Naive thymus-derived CD4-positive, alpha-beta T cell (primary cell): ENCODE measurements at regions of chr13 and their contacts with region 1.

Region 1: DNA sequence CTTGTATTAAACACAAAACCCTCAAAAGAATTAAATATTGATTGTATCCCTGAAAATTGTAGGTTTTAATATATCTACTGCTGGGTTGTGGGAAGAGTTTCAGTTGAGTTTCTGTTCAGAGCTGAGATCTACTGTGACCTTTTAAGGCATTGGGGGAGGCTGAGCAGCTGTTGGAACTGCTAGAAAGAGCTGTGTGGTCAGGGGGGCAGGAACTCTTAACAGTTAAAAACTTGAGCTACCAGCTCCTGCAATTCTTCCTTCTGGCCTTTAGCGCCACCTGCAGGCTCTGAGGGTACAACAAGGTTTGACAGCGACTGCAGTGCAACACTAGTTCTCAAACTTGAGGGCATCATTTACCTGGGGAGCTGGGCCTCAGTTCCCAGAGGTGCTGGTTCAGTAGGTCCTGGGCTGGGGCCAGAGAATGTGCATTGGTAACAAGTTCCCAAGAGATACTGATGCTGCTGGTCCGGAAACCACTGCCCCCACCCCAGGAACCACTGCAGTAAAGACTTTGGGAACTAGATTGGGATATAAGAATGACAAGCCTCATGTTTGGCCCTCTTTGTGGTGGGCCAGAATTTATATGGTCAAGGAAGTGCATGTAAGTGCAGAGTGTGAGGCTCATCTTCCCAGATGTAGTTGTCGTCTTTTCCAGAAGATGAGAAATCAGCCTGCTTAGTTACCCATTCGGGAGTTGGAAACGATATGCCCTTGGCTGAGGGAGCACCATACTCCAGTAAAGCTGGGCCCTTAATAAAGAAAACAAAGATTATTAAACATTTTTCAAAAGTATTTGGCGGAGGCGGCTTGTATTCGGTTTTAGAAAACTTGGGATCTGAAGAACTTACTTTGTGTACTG is 2.6 kb downstream of the RNASEH2B start:
- DNase-seq: peak; percentile 72 to 86 (median 82)
- ATAC-seq: peak; percentile 73
- H3K4me3 ChIP-seq: peak overlapping the region; percentile 86
- H3K4me3 Mint-ChIP-seq: peak overlapping the region; percentile 72 to 99 (median 93)
- H3K27ac ChIP-seq: peak overlapping the region; percentile 86
- H3K27ac Mint-ChIP-seq: peak overlapping the region; percentile 72 to 98 (median 92)
- H3K4me1 ChIP-seq: peaks cover 15 to 28% of the 10 kb centered on the region in 2 donors
- H3K4me1 Mint-ChIP-seq: peaks cover 34 to 70% (median 62%) of the 10 kb centered on the region in 7 donors
- H3K27me3 ChIP-seq: no peaks in the 10 kb centered on the region
- H3K27me3 Mint-ChIP-seq: no peaks in the 10 kb centered on the region

Region 2: DNA sequence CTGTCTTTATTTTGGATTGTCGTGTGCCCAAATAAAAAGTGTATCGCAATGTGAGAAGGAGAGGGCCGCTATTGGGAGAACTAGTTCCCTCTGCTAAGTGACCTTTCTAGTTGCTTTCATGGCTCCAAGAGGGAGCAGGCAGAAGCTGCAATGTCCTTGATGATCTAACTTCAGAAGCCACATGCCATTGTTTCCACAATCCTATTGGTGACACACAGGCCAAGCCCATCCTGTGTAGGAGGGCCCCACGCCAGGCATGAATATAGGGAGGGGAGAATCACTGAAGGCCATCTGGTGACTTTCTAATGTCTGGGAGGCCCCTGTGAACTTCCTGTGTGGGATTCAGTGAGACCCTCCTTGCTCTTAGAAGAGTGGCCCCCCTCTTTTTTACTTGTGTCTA is 1071.9 kb before region 1 on chr13:
- CTCF ChIA-PET with region 1: no interaction called
- POLR2A ChIA-PET with region 1: no interaction called
- intact Hi-C with region 1: loop called in 1 of 2 experiments (anchors 5 kb)
- DNase-seq: no peak
- ATAC-seq: no peak
- H3K4me3 ChIP-seq: no peak overlapping the region
- H3K4me3 Mint-ChIP-seq: no peak overlapping the region
- H3K27ac ChIP-seq: no peak overlapping the region
- H3K27ac Mint-ChIP-seq: no peak overlapping the region
- H3K4me1 ChIP-seq: no peaks in the 10 kb centered on the region
- H3K4me1 Mint-ChIP-seq: no peaks in the 10 kb centered on the region
- H3K27me3 ChIP-seq: no peaks in the 10 kb centered on the region
- H3K27me3 Mint-ChIP-seq: no peaks in the 10 kb centered on the region

Region 3: GRCh38 chr13:50123862-50124536 is 788.2 kb before region 1 on chr13:
- CTCF ChIA-PET with region 1: interaction called, 8 read pairs
- POLR2A ChIA-PET with region 1: interaction called, 23 read pairs
- intact Hi-C with region 1: loop called (anchors 1 kb)
- DNase-seq: peak in 7 of 9 donors; percentile 46 to 88 (median 64)
- ATAC-seq: peak; percentile 82
- H3K4me3 ChIP-seq: peak overlapping the region; percentile 52
- H3K4me3 Mint-ChIP-seq: peak overlapping the region; percentile 86 to 96 (median 93)
- H3K27ac ChIP-seq: peak overlapping the region; percentile 95
- H3K27ac Mint-ChIP-seq: peak overlapping the region; percentile 90 to 99 (median 97)
- H3K4me1 ChIP-seq: peaks cover 24 to 29% of the 10 kb centered on the region in 2 donors
- H3K4me1 Mint-ChIP-seq: peaks cover 25 to 61% (median 50%) of the 10 kb centered on the region in 7 donors
- H3K27me3 ChIP-seq: peaks cover 0 to 11% of the 10 kb centered on the region in 2 donors
- H3K27me3 Mint-ChIP-seq: peaks cover 1 to 15% (median 12%) of the 10 kb centered on the region in 5 donors

Region 4: DNA sequence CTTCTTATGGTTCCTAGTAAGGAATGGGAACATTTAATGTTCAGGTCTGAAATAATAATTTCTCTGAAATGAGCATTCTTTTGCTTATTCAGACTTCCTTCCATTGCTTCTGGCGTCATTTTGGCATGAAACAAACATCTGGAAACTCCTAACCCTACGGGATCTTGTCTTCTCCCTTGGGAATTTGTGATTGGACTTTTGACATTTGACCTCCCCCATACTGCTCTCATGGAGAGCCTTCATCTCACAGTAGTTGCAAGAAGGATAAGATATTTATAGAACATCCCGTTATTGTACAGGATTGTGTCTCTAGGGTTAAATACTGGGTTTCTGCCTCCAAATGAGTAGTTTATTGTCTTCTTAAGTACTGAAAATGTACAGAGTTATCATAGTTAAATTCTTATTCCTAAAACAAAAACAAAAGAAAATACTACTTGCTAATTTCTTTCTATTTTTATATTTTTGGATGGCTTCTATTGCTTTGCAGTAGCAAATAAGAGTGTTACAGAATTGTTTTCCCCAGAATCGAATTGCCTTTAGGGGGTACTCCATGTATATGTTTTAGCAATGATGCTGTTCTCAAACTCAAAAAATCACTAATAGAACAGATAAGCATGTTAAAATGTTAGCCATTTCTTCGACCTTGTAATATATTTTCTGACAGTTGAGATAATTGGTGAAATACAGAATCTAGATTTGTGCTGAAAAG is 435.4 kb before region 1 on chr13:
- CTCF ChIA-PET with region 1: interaction called, 4 read pairs
- POLR2A ChIA-PET with region 1: no interaction called
- intact Hi-C with region 1: loop called in 1 of 2 experiments (anchors 1 kb)
- DNase-seq: no peak
- ATAC-seq: no peak
- H3K4me3 ChIP-seq: no peak overlapping the region
- H3K4me3 Mint-ChIP-seq: no peak overlapping the region
- H3K27ac ChIP-seq: no peak overlapping the region
- H3K27ac Mint-ChIP-seq: no peak overlapping the region
- H3K4me1 ChIP-seq: no peaks in the 10 kb centered on the region
- H3K4me1 Mint-ChIP-seq: no peaks in the 10 kb centered on the region
- H3K27me3 ChIP-seq: no peaks in the 10 kb centered on the region
- H3K27me3 Mint-ChIP-seq: peaks cover 0 to 35% (median 6%) of the 10 kb centered on the region in 5 donors

Region 5: DNA sequence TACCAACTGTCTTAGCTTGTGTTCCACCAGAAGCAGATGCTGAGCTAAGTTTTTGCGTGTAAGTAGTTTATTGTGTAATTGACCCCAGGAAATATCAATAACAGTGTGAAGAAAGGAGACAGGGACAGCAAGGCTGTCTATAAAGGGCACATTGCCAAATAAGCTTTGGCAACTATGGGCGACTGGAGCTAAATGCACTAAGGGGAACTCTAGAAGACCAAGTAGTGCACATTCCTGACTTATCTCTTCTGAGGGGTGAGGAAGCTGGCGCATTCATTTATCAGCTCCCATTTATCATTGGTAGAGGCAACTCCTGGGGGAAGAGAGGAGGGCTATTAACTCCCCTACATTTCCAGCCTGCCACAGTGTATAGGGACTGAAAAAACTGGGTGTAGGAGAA is 203.7 kb before region 1 on chr13:
- CTCF ChIA-PET with region 1: no interaction called
- POLR2A ChIA-PET with region 1: no interaction called
- intact Hi-C with region 1: loop called (anchors 10 kb)
- DNase-seq: no peak
- ATAC-seq: no peak
- H3K4me3 ChIP-seq: no peak overlapping the region
- H3K4me3 Mint-ChIP-seq: no peak overlapping the region
- H3K27ac ChIP-seq: no peak overlapping the region
- H3K27ac Mint-ChIP-seq: no peak overlapping the region
- H3K4me1 ChIP-seq: peaks cover under 1 to 2% of the 10 kb centered on the region in 2 donors
- H3K4me1 Mint-ChIP-seq: peaks cover 0 to 10% (median 5%) of the 10 kb centered on the region in 7 donors
- H3K27me3 ChIP-seq: no peaks in the 10 kb centered on the region
- H3K27me3 Mint-ChIP-seq: peaks cover 0 to 17% (median 8%) of the 10 kb centered on the region in 5 donors

Region 6: GRCh38 chr13:50901701-50902100 is 10.5 kb before region 1 on chr13:
- CTCF ChIA-PET with region 1: interaction called, 28 read pairs
- POLR2A ChIA-PET with region 1: interaction called, 122 read pairs
- intact Hi-C with region 1: no loop called
- DNase-seq: no peak
- ATAC-seq: no peak
- H3K4me3 ChIP-seq: no peak overlapping the region
- H3K4me3 Mint-ChIP-seq: no peak overlapping the region
- H3K27ac ChIP-seq: no peak overlapping the region
- H3K27ac Mint-ChIP-seq: no peak overlapping the region
- H3K4me1 ChIP-seq: no peaks in the 10 kb centered on the region
- H3K4me1 Mint-ChIP-seq: peaks cover 0 to 8% (median 0%) of the 10 kb centered on the region in 7 donors
- H3K27me3 ChIP-seq: no peaks in the 10 kb centered on the region
- H3K27me3 Mint-ChIP-seq: no peaks in the 10 kb centered on the region